ENCODE measurements at regions of chr11 and their contacts with region 1.

Region 1: GRCh38 chr11:97990162-97990920 is 1030.4 kb upstream of the CNTN5 start:
- DNase-seq: no peak
- ATAC-seq: no peak
- H3K4me3 ChIP-seq: no peak overlapping the region
- H3K4me3 Mint-ChIP-seq: no peak overlapping the region
- H3K27ac ChIP-seq: no peak overlapping the region
- H3K27ac Mint-ChIP-seq: no peak overlapping the region
- H3K4me1 ChIP-seq: no peaks in the 10 kb centered on the region
- H3K4me1 Mint-ChIP-seq: no peaks in the 10 kb centered on the region
- H3K27me3 ChIP-seq: no peaks in the 10 kb centered on the region
- H3K27me3 Mint-ChIP-seq: no peaks in the 10 kb centered on the region
- CTCF ChIP-seq: no peak

Region 2: DNA sequence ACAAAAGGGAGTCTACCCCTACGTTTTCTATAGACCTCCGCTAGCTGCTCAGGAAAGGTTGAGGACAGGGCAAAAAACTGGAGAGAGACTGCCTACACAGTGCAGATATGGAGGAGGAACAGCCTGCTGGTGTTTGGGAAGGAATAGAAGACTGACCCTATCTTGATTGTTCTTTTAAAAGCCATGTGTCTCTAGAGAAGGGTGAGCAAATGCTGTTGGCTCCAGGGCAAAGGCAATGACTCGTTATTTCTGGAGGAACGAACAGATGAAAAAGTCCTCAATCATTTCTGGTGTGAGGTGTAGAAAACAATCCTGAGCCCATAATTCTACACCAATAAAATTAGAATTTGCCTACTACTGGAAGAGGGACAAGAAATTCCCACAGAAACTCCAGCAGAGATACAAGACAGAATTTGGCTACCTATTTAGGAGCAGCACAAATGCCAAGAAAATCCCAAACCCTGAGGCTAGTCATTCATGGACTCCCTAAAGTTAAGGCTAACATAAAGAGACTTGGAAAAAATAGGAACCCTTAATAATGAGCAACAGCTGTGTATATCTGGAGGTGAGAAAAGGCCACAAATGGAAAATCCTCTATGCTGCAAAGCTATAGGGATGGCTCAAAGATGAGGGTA is 175.9 kb before region 1 on chr11:
- CTCF ChIA-PET with region 1: no interaction called
- POLR2A ChIA-PET with region 1: no interaction called
- intact Hi-C with region 1: loop called in 1 of 2 experiments (anchors 10 kb)
- DNase-seq: no peak
- ATAC-seq: no peak
- H3K4me3 ChIP-seq: no peak overlapping the region
- H3K4me3 Mint-ChIP-seq: no peak overlapping the region
- H3K27ac ChIP-seq: no peak overlapping the region
- H3K27ac Mint-ChIP-seq: no peak overlapping the region
- H3K4me1 ChIP-seq: no peaks in the 10 kb centered on the region
- H3K4me1 Mint-ChIP-seq: no peaks in the 10 kb centered on the region
- H3K27me3 ChIP-seq: no peaks in the 10 kb centered on the region
- H3K27me3 Mint-ChIP-seq: no peaks in the 10 kb centered on the region
- CTCF ChIP-seq: no peak

Region 3: DNA sequence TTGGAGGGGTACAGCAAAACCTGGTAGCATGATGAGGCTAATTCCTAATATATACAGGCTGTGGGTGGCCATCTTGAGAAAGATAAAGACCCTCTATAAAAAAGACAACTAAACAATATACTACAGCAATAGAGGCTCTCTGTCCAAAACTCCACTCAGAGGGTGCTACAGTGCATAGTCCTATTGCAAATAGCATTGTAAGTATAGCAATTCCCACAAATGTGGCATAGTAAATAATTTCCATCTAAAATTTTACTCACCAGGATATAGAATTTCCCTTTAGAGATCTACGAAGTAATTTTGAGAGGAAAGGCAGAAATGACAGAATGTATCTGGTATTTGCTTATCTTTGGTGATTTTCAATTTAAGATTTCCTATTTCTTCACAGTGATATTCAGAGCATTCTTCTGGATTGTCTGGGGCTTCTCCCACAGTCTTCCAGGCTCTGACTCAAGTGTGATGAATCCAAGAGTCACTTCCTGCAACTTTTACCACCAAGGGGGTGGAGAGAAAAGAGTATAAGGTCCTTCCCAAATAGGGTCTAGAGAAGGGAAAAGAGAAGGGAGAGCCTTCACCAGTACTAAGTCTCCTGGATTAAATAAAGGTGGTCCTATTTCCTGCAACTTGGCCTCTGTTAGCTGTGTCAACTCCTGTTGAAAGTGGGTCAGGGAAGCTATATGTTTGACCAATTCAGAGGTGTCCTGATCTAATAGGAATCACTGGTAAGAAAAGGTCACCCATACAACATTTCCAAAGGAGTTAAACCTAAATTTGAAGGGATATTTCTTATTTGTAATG is 24.3 kb before region 1 on chr11:
- CTCF ChIA-PET with region 1: no interaction called
- POLR2A ChIA-PET with region 1: no interaction called
- intact Hi-C with region 1: no loop called
- DNase-seq: no peak
- ATAC-seq: no peak
- H3K4me3 ChIP-seq: no peak overlapping the region
- H3K4me3 Mint-ChIP-seq: no peak overlapping the region
- H3K27ac ChIP-seq: no peak overlapping the region
- H3K27ac Mint-ChIP-seq: no peak overlapping the region
- H3K4me1 ChIP-seq: no peaks in the 10 kb centered on the region
- H3K4me1 Mint-ChIP-seq: no peaks in the 10 kb centered on the region
- H3K27me3 ChIP-seq: no peaks in the 10 kb centered on the region
- H3K27me3 Mint-ChIP-seq: no peaks in the 10 kb centered on the region
- CTCF ChIP-seq: no peak

Measured in CD4-positive, alpha-beta T cell (primary cell).